IMR-90 (cell line): ENCODE measurements at regions of chr9 and their contacts with region 1.

Region 1: GRCh38 chr9:3608011-3608410 is 82.2 kb upstream of the RFX3 start:
- DNase-seq: no peak
- ATAC-seq: no peak
- H3K4me3 ChIP-seq: no peak overlapping the region
- H3K27ac ChIP-seq: no peak overlapping the region
- H3K4me1 ChIP-seq: no peaks in the 10 kb centered on the region
- H3K27me3 ChIP-seq: no peaks in the 10 kb centered on the region; the same call in 1 of the 2 replicates
- CTCF ChIP-seq: no peak
- POLR2A ChIP-seq: no peak
- RAD21 ChIP-seq: no peak

Region 2: GRCh38 chr9:3549225-3549624 is 58.8 kb before region 1 on chr9:
- CTCF ChIA-PET with region 1: no interaction called
- POLR2A ChIA-PET with region 1: no interaction called
- dilution Hi-C with region 1: no loop called
- in situ Hi-C with region 1: no loop called
- intact Hi-C with region 1: loop called (anchors 10 kb)
- DNase-seq: no peak
- ATAC-seq: no peak
- H3K4me3 ChIP-seq: no peak overlapping the region
- H3K27ac ChIP-seq: no peak overlapping the region
- H3K4me1 ChIP-seq: no peaks in the 10 kb centered on the region
- H3K27me3 ChIP-seq: no peaks in the 10 kb centered on the region
- CTCF ChIP-seq: no peak
- POLR2A ChIP-seq: no peak
- RAD21 ChIP-seq: no peak

Region 3: DNA sequence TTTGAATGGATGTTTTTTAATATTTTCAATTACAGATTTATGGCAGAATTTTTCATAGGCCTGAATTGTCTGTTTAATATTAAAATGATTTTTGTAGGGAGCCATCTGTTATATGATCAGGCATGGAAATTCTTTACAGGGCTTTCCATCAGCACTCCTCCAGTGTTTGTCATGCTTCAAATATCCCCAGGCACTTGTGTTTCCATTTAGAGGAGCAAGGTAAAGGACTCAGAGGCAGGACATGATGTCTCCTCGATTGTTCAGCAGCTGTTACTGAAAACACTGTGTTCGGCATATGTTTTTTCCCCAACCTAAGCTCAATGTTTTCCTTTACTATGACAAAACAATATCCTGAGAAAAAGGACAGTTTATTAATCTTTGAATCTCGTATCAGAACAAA is 90.1 kb after region 1 on chr9:
- CTCF ChIA-PET with region 1: no interaction called
- POLR2A ChIA-PET with region 1: no interaction called
- dilution Hi-C with region 1: no loop called
- in situ Hi-C with region 1: no loop called
- intact Hi-C with region 1: no loop called
- DNase-seq: no peak
- ATAC-seq: no peak
- H3K4me3 ChIP-seq: no peak overlapping the region
- H3K27ac ChIP-seq: no peak overlapping the region
- H3K4me1 ChIP-seq: no peaks in the 10 kb centered on the region
- H3K27me3 ChIP-seq: peaks cover 11% of the 10 kb centered on the region
- CTCF ChIP-seq: no peak
- POLR2A ChIP-seq: no peak
- RAD21 ChIP-seq: no peak